B cell (primary cell): ENCODE measurements at regions of chr12 and their contacts with region 1.

Region 1: GRCh38 chr12:76348079-76348901 is at the start of gene BBS10:
- DNase-seq: peak; percentile 94
- ATAC-seq: peak; percentile 97
- H3K4me3 ChIP-seq: peak within 1 kb of the TSS; percentile 76 to 90 (median 79)
- H3K4me3 Mint-ChIP-seq: peak within 1 kb of the TSS; percentile 92
- H3K27ac ChIP-seq: peak within 1 kb of the TSS; percentile 86 to 89
- H3K27ac Mint-ChIP-seq: peak within 1 kb of the TSS; percentile 98
- H3K4me1 ChIP-seq: peaks cover 17% of the 10 kb centered on the region in 2 donors
- H3K4me1 Mint-ChIP-seq: peaks cover 27% of the 10 kb centered on the region
- H3K27me3 ChIP-seq: no peaks in the 10 kb centered on the region
- H3K27me3 Mint-ChIP-seq: no peaks in the 10 kb centered on the region
- CTCF ChIP-seq: peak; percentile 9
- total RNA-seq, gene BBS10: 11.2 and 12.9 TPM in 2 replicates

Region 2: GRCh38 chr12:75390899-75391538 is 957.3 kb before region 1 on chr12 and contains the start of gene GLIPR1L2:
- CTCF ChIA-PET with region 1: no interaction called
- POLR2A ChIA-PET with region 1: no interaction called
- intact Hi-C with region 1: loop called (anchors 1 kb)
- DNase-seq: peak; percentile 94
- ATAC-seq: peak; percentile 94
- H3K4me3 ChIP-seq: peak within 1 kb of the TSS; percentile 66 to 85 (median 75)
- H3K4me3 Mint-ChIP-seq: peak within 1 kb of the TSS; percentile 98
- H3K27ac ChIP-seq: peak within 1 kb of the TSS; percentile 73 to 85
- H3K27ac Mint-ChIP-seq: peak within 1 kb of the TSS; percentile 99
- H3K4me1 ChIP-seq: peaks cover 23 to 24% of the 10 kb centered on the region in 2 donors
- H3K4me1 Mint-ChIP-seq: peaks cover 33% of the 10 kb centered on the region
- H3K27me3 ChIP-seq: no peaks in the 10 kb centered on the region
- H3K27me3 Mint-ChIP-seq: no peaks in the 10 kb centered on the region
- CTCF ChIP-seq: peak; percentile 81
- total RNA-seq, gene GLIPR1L2: 0.46 and 0.91 TPM in 2 replicates

Region 3: DNA sequence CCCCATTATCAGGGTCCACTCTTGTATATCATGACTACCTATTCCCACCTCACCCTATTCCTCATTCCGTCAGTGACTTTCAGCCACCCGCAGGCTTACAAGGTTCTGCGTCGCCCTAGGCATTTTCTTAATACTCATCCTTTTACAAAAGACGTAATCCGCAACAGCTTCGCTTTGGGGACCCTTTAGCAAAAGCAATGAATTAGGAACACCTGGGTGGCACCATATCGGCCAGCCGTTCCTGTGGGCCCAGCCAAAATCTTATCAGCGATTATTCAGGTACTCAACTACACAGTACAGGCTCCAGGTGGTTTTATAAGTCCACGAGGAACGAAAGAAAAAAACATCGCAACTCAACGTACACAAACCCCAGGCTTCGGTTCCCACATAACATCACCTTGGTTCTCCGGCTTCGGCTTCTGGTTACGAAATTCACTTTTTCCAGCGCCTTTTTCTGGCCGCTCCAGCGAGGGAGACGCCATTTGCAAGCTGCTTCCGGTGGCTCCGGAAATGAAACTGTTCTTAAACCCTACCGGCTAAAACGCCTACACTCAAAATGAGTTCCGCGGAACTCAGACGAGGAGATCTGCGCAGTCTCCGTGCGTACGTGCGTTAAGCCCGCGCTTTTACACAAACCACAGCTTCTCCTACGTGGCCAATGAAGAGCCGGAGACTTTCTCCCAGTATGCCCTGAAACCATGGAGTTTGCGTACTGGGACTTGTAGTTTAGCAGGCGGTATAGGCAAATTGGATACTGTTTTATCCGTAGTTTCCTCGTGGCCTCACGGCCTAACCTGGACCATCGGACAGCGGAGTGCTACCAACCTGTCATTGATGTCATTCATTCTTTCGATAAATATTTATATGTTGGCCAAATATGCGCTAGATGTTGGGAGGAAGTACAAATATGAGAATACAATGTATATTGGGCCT is 836.9 kb before region 1 on chr12 and contains the start of gene KRR1:
- CTCF ChIA-PET with region 1: interaction called, 6 read pairs
- POLR2A ChIA-PET with region 1: interaction called, 7 read pairs
- intact Hi-C with region 1: loop called (anchors 1 kb)
- DNase-seq: peak; percentile 95
- ATAC-seq: peak; percentile 97
- H3K4me3 ChIP-seq: peak within 1 kb of the TSS; percentile 61 to 100 (median 93)
- H3K4me3 Mint-ChIP-seq: peak within 1 kb of the TSS; percentile 93
- H3K27ac ChIP-seq: peak within 1 kb of the TSS; percentile 72 to 83
- H3K27ac Mint-ChIP-seq: peak within 1 kb of the TSS; percentile 95
- H3K4me1 ChIP-seq: peaks cover 11 to 18% of the 10 kb centered on the region in 2 donors
- H3K4me1 Mint-ChIP-seq: peaks cover 28% of the 10 kb centered on the region
- H3K27me3 ChIP-seq: no peaks in the 10 kb centered on the region
- H3K27me3 Mint-ChIP-seq: no peaks in the 10 kb centered on the region
- CTCF ChIP-seq: no peak
- total RNA-seq, gene KRR1: 80.2 and 87.7 TPM in 2 replicates

Region 4: GRCh38 chr12:76158518-76159321 is 189.6 kb before region 1 on chr12:
- CTCF ChIA-PET with region 1: interaction called, 4 read pairs
- POLR2A ChIA-PET with region 1: no interaction called
- intact Hi-C with region 1: loop called (anchors 5 kb)
- DNase-seq: peak; percentile 82
- ATAC-seq: peak; percentile 99
- H3K4me3 ChIP-seq: peak overlapping the region; percentile 5 to 68 (median 45)
- H3K4me3 Mint-ChIP-seq: peak overlapping the region; percentile 91
- H3K27ac ChIP-seq: peak overlapping the region; percentile 14 to 76
- H3K27ac Mint-ChIP-seq: peak overlapping the region; percentile 94
- H3K4me1 ChIP-seq: peaks cover 9 to 16% of the 10 kb centered on the region in 2 donors
- H3K4me1 Mint-ChIP-seq: peaks cover 25% of the 10 kb centered on the region
- H3K27me3 ChIP-seq: no peaks in the 10 kb centered on the region
- H3K27me3 Mint-ChIP-seq: no peaks in the 10 kb centered on the region
- CTCF ChIP-seq: peak; percentile 83

Region 5: DNA sequence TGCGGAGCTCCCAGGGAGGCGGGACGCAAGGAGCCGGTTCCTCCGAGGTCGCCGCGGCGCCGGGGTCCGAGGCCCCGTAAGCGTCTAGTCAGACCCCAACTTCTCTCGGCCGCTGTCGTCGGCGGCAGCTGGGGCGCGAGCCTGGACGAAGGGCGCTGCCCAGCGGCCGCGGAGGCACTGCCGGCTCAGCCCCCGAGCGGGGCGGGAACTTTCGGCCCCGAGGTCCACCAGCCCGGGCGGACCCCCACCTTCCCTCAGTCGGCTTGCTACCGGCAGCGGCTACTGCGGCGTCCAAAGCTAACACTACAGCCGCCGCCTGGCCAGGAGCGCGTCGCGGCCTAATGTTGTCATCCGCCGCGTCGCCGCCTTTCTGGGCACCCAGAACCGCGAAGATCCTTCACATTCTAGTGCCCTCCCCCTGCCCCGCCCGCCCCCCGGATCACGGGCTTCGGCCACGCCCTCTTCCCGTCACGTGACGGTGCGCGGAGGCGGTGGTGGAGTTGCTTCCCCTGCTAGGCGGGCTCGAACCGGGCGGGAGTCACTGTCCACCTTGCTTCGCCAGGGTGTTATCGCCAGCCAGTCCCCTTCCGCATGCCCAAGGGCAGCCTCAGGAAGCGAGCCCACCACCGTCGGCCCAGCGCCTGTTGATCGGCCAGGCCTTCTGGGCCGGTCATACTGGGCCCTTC is 211.3 kb after region 1 on chr12 and contains the start of gene OSBPL8:
- CTCF ChIA-PET with region 1: interaction called, 11 read pairs
- POLR2A ChIA-PET with region 1: interaction called, 5 read pairs
- intact Hi-C with region 1: loop called (anchors 1 kb)
- DNase-seq: peak; percentile 95
- ATAC-seq: peak; percentile 79
- H3K4me3 ChIP-seq: peak within 1 kb of the TSS; percentile 76 to 99 (median 93)
- H3K4me3 Mint-ChIP-seq: peak within 1 kb of the TSS; percentile 98
- H3K27ac ChIP-seq: peak within 1 kb of the TSS; percentile 93 to 96
- H3K27ac Mint-ChIP-seq: peak within 1 kb of the TSS; percentile 98
- H3K4me1 ChIP-seq: peaks cover 29 to 46% of the 10 kb centered on the region in 2 donors
- H3K4me1 Mint-ChIP-seq: peaks cover 44% of the 10 kb centered on the region
- H3K27me3 ChIP-seq: no peaks in the 10 kb centered on the region
- H3K27me3 Mint-ChIP-seq: no peaks in the 10 kb centered on the region
- CTCF ChIP-seq: no peak
- total RNA-seq, gene OSBPL8: 112 and 116 TPM in 2 replicates

Region 6: GRCh38 chr12:76763743-76764675 is 415.7 kb after region 1 on chr12 and contains the start of gene ZDHHC17:
- CTCF ChIA-PET with region 1: no interaction called
- POLR2A ChIA-PET with region 1: interaction called, 3 read pairs
- intact Hi-C with region 1: loop called (anchors 1 kb)
- DNase-seq: peak; percentile 95
- ATAC-seq: peak; percentile 86
- H3K4me3 ChIP-seq: peak within 1 kb of the TSS; percentile 82 to 94 (median 92)
- H3K4me3 Mint-ChIP-seq: peak within 1 kb of the TSS; percentile 99
- H3K27ac ChIP-seq: peak within 1 kb of the TSS; percentile 94 to 96
- H3K27ac Mint-ChIP-seq: peak within 1 kb of the TSS; percentile 99
- H3K4me1 ChIP-seq: peaks cover 17 to 29% of the 10 kb centered on the region in 2 donors
- H3K4me1 Mint-ChIP-seq: peaks cover 47% of the 10 kb centered on the region
- H3K27me3 ChIP-seq: no peaks in the 10 kb centered on the region
- H3K27me3 Mint-ChIP-seq: no peaks in the 10 kb centered on the region
- CTCF ChIP-seq: no peak
- total RNA-seq, gene ZDHHC17: 75.0 and 86.7 TPM in 2 replicates